ENCODE measurements at regions of chr10 and their contacts with region 1.

Region 1: DNA sequence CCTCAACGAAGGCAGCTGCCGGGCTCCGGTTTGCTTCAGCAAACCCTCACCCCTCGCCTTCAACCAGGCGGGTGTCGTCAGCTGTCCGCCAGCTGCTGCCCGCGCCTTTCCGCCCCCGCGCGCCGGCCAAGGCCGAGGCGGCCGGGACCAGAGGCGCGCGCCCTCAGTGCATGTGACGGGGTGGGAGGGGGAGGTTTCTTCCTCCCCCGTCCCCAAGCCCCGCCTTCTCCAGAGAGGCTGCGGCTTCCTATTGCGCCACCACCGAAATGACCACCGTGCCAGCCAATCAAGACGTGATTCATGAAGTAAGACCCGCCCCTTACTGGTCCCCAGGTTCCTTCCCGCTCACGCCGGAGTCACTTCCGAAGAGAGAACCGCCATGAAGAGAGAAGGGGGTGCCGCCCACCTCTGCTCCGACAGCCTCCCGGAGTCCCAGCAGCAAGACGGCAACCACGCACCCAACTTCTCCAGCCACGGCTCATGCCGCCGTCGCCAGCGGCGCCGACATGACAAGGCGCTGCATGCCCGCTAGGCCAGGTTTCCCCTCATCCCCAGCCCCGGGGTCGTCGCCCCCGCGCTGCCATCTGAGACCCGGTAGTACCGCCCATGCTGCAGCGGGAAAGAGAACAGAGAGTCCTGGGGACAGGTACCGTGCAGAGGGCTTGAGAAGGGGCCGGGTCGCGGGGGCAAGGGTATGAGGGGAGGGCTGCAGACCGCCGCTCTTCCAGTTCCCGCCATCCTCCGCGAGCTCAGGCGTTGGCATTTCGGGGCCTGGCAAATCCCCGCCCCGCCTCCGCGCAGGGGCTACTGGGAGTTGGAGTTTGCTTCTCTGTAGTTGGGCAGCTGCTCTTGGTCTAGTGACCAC is at the start of gene SLF2:
- DNase-seq: peak; percentile 97
- H3K4me3 Mint-ChIP-seq: peak within 1 kb of the TSS; percentile 99
- H3K27ac Mint-ChIP-seq: peak within 1 kb of the TSS; percentile 99
- H3K4me1 Mint-ChIP-seq: peaks cover 47% of the 10 kb centered on the region
- H3K27me3 Mint-ChIP-seq: no peaks in the 10 kb centered on the region
- total RNA-seq, gene SLF2: 33.9 to 35.9 TPM

Region 2: DNA sequence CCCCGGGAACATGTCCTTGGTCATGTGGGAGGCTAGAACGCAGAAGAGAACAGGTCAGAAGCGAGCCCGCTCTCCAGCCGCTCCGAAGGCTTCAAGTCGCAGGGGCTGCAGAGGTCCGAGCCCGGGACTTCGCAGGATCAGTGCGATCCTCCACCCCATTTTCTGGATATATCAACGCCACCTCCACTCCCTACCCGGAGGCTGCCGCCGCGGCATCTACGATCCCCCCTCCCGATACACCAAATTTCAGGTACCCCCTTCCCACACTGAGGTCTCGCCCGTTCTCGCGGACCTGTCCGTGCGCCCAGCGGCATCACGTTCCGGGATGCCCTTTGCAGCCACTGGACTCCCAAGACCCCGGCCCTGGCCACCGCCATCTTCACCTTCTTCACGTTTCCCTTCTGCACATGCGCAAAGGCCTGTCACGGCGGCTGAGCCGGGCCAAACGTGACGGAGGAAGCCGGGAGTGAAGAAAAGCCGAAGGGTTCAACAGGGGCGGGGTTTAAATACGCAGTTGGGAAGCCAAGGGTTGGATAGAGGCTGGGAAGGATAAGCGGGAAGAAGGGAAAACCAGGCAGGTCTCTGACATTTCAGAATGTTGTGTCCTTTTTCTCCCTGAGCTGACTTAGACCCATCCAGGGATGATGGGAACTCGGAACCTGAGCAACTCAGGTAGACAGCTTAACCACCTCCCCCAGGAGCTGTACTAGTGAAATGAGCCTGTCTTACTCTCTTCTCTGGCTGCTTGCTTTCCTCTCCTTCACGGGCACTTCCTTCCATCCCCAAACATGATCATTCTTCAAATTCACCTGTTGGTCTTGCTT is 383.1 kb before region 1 on chr10 and contains the start of gene NDUFB8:
- CTCF ChIA-PET with region 1: no interaction called
- POLR2A ChIA-PET with region 1: no interaction called
- intact Hi-C with region 1: loop called (anchors 2 kb)
- DNase-seq: peak; percentile 92
- H3K4me3 Mint-ChIP-seq: peak within 1 kb of the TSS; percentile 100
- H3K27ac Mint-ChIP-seq: peak within 1 kb of the TSS; percentile 96
- H3K4me1 Mint-ChIP-seq: peaks cover 33% of the 10 kb centered on the region
- H3K27me3 Mint-ChIP-seq: no peaks in the 10 kb centered on the region
- total RNA-seq, gene NDUFB8: 390 to 404 TPM

Region 3: DNA sequence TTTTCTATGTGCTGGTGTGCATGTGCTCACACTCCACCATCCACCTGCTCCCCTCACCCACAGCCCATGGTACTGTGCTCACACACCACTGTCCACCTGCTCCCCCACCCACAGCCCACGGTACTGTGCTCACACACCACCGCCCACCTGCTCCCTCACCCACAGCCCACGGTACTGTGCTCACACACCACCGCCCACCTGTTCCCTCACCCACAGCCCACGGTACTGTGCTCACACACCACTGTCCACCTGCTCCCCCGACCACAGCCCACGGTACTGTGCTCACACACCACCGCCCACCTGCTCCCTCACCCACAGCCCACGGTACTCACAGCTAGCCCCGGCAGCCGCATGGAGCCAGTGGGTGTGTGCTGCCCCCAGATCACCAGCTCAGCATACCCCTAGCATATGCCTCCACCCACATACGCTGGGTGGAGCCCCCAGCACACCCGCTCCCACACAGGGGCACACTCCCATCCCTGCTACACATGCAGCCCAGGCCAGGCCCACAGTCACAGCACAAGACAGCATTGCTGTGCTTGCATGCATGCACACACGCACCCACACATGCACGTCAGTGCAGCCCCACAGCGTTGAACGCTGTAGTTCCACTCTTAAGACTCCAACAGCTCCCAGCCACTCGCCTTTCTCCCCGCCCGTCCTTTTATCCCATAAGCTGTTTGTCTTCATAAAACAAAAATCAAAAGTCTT is 105.4 kb before region 1 on chr10:
- CTCF ChIA-PET with region 1: no interaction called
- POLR2A ChIA-PET with region 1: no interaction called
- intact Hi-C with region 1: no loop called
- DNase-seq: no peak
- H3K4me3 Mint-ChIP-seq: no peak overlapping the region
- H3K27ac Mint-ChIP-seq: no peak overlapping the region
- H3K4me1 Mint-ChIP-seq: no peaks in the 10 kb centered on the region
- H3K27me3 Mint-ChIP-seq: peaks cover 64% of the 10 kb centered on the region

Region 4: DNA sequence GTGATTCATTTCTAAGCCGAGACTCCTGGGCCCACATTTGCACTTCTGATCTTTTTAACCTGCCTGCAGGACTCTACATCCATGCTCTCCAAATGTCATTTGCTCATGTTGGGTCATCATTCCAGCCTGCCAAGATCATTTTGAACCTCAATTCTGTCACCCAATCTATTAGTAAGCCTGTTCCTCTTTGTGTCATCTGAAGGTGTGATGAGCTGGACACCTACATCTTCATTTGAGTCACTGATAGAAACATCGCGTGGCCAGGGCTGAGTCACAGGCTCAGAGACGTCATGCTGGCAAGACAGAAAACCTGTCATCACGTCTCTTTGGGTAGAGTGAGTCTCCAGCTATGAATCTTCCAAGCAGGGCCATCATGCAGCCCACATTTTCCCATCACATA is 65.4 kb before region 1 on chr10:
- CTCF ChIA-PET with region 1: no interaction called
- POLR2A ChIA-PET with region 1: no interaction called
- intact Hi-C with region 1: loop called (anchors 1 kb)
- DNase-seq: peak; percentile 94
- H3K4me3 Mint-ChIP-seq: peak overlapping the region; percentile 18
- H3K27ac Mint-ChIP-seq: peak overlapping the region; percentile 86
- H3K4me1 Mint-ChIP-seq: peaks cover 28% of the 10 kb centered on the region
- H3K27me3 Mint-ChIP-seq: peaks cover 48% of the 10 kb centered on the region

Region 5: DNA sequence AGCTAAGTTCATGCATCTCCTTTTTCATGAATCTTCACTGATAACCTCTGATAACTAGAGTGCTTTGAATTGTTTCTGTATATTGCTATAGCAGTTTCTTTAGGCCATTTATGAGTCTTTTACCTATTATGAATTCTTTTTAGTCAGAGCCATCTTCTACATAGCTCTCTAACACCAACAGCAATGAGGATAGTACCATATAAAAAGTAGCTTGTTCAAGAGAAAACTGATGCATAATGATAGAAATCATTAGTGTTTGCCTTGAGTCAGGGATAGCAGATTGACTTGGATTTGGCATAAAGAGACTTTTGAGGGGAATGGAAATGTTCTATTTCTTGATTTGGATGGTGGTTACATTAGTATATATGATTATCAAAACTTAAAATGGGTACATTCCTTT is 30.7 kb after region 1 on chr10:
- CTCF ChIA-PET with region 1: no interaction called
- POLR2A ChIA-PET with region 1: interaction called, 4 read pairs
- intact Hi-C with region 1: loop called (anchors 2 kb)
- DNase-seq: no peak
- H3K4me3 Mint-ChIP-seq: no peak overlapping the region
- H3K27ac Mint-ChIP-seq: peak overlapping the region; percentile 71
- H3K4me1 Mint-ChIP-seq: peaks cover 15% of the 10 kb centered on the region
- H3K27me3 Mint-ChIP-seq: no peaks in the 10 kb centered on the region

Measured in activated CD4-positive, alpha-beta memory T cell treated with anti-CD3 and anti-CD28 coated beads for 36 hours (primary cell).